Activated B cell treated with CpG ODN at 0.5 μM for 24 hours (primary cell): ENCODE measurements at regions of chr11 and their contacts with region 1.

Region 1: DNA sequence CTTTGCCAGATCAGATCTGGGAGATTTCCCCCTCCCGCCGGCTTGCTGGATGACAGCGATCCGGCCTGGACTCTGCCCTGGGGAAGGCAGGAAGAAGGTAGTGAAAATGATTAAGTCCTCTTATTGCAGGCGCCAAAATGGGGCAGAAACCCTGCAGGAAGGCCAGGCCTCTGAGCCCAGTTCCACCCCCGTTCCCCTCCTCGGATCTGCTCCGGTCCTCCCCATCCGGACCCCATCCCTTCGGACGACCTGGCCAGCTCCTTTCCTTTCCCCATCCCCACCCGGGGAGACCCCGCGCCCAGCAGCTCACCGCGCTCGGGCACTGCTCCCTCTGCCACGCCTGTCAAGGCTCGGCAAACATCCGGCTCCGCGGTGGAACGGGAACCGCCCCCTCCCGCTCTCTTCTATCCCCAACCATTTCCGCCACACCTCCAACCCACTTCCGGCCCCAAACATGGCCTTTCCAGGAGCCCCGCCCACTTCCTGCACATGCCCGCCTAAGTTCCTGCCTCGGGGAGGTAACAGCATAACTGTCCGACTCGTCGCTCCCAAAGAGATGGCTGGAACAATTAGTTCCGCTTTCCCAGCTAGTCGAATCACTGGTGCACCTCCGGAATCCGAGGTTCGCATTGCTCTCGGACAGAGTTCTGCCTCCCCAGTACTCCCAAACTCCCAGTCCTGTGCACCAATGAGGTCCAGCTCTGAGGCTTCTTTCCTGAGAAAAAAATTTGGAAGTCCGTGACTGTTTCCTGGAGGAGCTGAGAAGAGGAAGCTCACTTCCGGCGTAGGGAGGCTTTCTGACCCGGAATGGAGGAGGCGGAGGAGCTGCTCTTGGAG is at the starts of genes ARHGAP1 and ZNF408:
- DNase-seq: peak; percentile 96
- ATAC-seq: peak; percentile 87
- H3K4me3 Mint-ChIP-seq: peak within 1 kb of the TSS; percentile 99
- H3K27ac Mint-ChIP-seq: peak within 1 kb of the TSS; percentile 95
- H3K4me1 Mint-ChIP-seq: peaks cover 51% of the 10 kb centered on the region
- H3K27me3 Mint-ChIP-seq: no peaks in the 10 kb centered on the region
- CTCF ChIP-seq: no peak
- total RNA-seq, gene ARHGAP1: 47.6 and 58.0 TPM in 2 replicates
- total RNA-seq, gene ZNF408: 15.6 and 16.1 TPM in 2 replicates

Region 2: GRCh38 chr11:46121724-46122477 is 578.6 kb before region 1 on chr11:
- CTCF ChIA-PET with region 1: no interaction called
- POLR2A ChIA-PET with region 1: no interaction called
- intact Hi-C with region 1: loop called (anchors 1 kb)
- DNase-seq: no peak
- ATAC-seq: peak; percentile 47
- H3K4me3 Mint-ChIP-seq: peak overlapping the region; percentile 87
- H3K27ac Mint-ChIP-seq: peak overlapping the region; percentile 91
- H3K4me1 Mint-ChIP-seq: peaks cover 30% of the 10 kb centered on the region
- H3K27me3 Mint-ChIP-seq: no peaks in the 10 kb centered on the region
- CTCF ChIP-seq: no peak

Region 3: DNA sequence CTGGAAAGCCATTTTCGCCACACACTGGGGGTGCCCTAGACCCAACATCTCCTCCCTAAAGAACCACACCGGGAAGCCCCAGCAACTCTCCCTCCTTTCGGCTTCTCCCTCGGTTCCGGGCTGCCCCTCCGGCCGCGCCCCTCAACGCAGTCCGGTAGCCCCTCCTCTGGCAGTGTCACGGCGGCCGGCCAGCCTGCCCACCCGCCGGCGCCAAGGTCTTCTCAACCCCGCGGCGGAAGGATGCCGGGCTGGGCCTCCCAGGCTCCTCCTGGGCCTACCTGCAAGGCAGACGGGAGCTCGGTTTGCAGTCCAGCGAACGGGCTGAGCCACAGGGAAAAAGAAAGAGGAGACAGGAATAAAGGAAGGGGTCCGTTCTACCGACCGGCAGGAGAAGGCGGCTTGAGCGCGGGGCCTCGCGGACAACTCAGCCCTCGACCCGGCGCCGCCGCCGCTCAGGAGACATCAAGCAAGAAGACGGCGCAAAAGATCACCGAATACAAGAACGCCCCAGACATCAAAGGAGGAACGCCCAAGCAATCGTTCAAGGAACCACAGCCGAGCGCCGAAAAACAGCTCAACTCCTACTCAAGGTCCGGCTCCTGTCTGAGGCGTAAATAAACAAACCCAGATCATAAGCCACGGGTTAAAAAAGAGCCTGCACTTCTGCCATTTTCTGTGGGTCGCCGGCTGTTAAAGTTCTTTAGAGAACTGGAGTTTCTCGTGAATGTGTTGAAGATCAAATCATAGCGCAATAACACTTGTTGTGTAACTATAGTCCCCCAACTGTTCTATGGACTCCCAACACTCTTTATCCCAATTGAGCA is 106.7 kb before region 1 on chr11 and contains the start of gene AMBRA1:
- CTCF ChIA-PET with region 1: no interaction called
- POLR2A ChIA-PET with region 1: interaction called, 16 read pairs
- intact Hi-C with region 1: loop called (anchors 1 kb)
- DNase-seq: peak; percentile 77
- ATAC-seq: peak; percentile 93
- H3K4me3 Mint-ChIP-seq: peak within 1 kb of the TSS; percentile 97
- H3K27ac Mint-ChIP-seq: peak within 1 kb of the TSS; percentile 88
- H3K4me1 Mint-ChIP-seq: peaks cover 43% of the 10 kb centered on the region
- H3K27me3 Mint-ChIP-seq: no peaks in the 10 kb centered on the region
- CTCF ChIP-seq: no peak
- total RNA-seq, gene AMBRA1: 35.5 and 39.1 TPM in 2 replicates

Region 4: GRCh38 chr11:46936138-46937110 is 236.0 kb after region 1 on chr11 and contains the start of gene CSTPP1:
- CTCF ChIA-PET with region 1: no interaction called
- POLR2A ChIA-PET with region 1: interaction called, 5 read pairs
- intact Hi-C with region 1: loop called (anchors 1 kb)
- DNase-seq: peak; percentile 88
- ATAC-seq: peak; percentile 97
- H3K4me3 Mint-ChIP-seq: peak within 1 kb of the TSS; percentile 99
- H3K27ac Mint-ChIP-seq: peak within 1 kb of the TSS; percentile 93
- H3K4me1 Mint-ChIP-seq: peaks cover 17% of the 10 kb centered on the region
- H3K27me3 Mint-ChIP-seq: peaks cover 10% of the 10 kb centered on the region
- CTCF ChIP-seq: no peak
- total RNA-seq, gene CSTPP1: 26.2 and 29.9 TPM in 2 replicates

Region 5: GRCh38 chr11:47248664-47249377 is 548.4 kb after region 1 on chr11 and contains the start of gene ACP2:
- CTCF ChIA-PET with region 1: interaction called, 3 read pairs
- POLR2A ChIA-PET with region 1: no interaction called
- intact Hi-C with region 1: loop called (anchors 1 kb)
- DNase-seq: peak; percentile 82
- ATAC-seq: peak; percentile 96
- H3K4me3 Mint-ChIP-seq: peak within 1 kb of the TSS; percentile 98
- H3K27ac Mint-ChIP-seq: peak within 1 kb of the TSS; percentile 98
- H3K4me1 Mint-ChIP-seq: peaks cover 21% of the 10 kb centered on the region
- H3K27me3 Mint-ChIP-seq: no peaks in the 10 kb centered on the region
- CTCF ChIP-seq: no peak
- total RNA-seq, gene ACP2: 18.7 and 22.5 TPM in 2 replicates

Region 6: DNA sequence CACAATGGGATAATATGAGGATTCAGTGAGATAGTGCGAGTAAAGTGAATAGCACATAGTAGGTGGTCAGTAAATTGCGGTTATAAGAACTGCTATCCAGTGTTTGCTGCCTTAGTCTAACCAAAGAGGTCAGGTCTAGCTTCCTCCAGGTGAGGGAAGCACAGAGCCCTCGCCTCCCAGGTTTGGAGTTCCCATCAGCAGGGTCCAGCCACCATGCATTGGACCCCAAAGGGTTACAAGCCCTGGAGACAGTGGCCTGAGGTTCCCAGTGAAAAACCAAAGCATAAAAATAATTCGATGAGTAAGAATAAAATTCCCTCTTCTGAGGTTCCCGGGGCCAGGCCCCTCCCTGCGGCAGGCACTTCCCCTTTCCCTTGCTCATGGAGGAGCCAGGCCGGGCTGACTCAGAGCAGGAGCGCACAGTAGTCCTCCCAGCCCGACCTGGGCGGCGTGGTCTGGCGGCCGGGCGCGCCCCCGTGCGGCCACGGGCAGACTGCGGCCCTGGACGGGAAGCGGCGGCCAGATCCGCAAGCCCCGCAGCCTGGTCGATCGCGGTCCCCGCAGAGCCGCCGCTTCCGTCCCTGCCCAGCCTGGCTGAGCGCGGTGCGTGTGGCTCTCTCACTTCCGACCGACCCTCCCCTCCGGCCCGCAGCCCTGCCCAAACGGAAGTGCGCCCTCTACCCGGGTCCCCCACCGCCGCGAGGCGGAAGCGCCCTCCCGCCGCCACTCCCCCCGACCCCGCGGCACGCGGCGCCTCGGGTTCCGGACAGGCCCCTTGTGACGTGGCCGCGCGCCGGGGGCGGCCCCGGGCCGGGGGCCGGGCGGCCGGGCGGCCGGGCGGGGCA is 707.5 kb after region 1 on chr11 and contains the start of gene SLC39A13:
- CTCF ChIA-PET with region 1: no interaction called
- POLR2A ChIA-PET with region 1: no interaction called
- intact Hi-C with region 1: loop called (anchors 10 kb)
- DNase-seq: peak; percentile 98
- ATAC-seq: peak; percentile 85
- H3K4me3 Mint-ChIP-seq: peak within 1 kb of the TSS; percentile 90
- H3K27ac Mint-ChIP-seq: peak within 1 kb of the TSS; percentile 95
- H3K4me1 Mint-ChIP-seq: peaks cover 24% of the 10 kb centered on the region
- H3K27me3 Mint-ChIP-seq: no peaks in the 10 kb centered on the region
- CTCF ChIP-seq: no peak
- total RNA-seq, gene SLC39A13: 27.5 and 28.2 TPM in 2 replicates